ENCODE measurements at regions of chr2 and their contacts with region 1.

Region 1: DNA sequence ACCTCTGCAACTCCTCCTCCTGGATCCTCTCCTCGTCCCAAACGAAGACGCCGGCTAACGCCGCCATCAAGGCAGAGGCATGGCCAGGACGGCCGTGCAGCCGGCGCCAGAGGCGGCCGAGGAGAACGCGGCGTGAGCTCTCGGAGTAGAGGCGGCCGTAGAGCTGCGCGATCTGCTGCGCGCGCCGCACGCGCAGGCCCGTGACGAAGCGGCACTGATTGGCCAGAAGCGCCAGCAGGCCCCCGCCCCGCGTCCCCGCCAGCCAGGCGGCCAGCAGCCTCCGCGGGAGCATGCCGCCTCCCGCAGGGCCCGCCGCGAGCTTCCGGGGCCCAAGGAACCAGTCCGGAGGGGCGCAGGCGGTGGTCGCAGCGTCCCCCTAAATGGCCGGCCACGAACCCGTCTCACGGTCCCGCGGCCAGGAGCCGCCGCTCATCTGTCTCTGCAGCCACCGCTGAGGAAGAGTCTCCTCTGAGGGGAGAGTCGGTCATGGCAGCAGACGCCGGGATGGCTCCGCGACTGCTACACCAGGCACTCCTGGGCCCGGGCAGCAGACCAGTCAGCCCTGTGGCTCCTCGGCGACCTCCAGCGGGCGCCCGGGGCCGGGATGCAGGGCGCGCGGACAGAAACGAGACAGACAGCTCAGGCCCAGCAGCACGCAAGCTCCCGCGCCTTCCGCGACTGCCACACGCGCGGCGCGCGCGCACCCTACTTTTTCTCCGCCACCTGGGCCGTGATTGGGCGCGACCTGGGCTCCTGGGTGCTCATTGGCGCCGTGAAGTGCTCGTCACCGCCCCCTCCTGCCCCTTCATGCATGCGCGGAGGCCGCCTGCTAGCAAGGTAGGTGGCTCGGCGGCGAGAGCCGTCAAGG is at the start of gene STARD7:
- DNase-seq: peak; percentile 99 to 100 (median 100)
- ATAC-seq: peak; percentile 98
- H3K4me3 ChIP-seq: peak within 1 kb of the TSS; percentile 72
- H3K27ac ChIP-seq: peak within 1 kb of the TSS; percentile 91
- H3K4me1 ChIP-seq: peaks cover 12% of the 10 kb centered on the region
- H3K27me3 ChIP-seq: no peaks in the 10 kb centered on the region
- total RNA-seq, gene STARD7: 142 to 184 (median 156) TPM

Region 2: DNA sequence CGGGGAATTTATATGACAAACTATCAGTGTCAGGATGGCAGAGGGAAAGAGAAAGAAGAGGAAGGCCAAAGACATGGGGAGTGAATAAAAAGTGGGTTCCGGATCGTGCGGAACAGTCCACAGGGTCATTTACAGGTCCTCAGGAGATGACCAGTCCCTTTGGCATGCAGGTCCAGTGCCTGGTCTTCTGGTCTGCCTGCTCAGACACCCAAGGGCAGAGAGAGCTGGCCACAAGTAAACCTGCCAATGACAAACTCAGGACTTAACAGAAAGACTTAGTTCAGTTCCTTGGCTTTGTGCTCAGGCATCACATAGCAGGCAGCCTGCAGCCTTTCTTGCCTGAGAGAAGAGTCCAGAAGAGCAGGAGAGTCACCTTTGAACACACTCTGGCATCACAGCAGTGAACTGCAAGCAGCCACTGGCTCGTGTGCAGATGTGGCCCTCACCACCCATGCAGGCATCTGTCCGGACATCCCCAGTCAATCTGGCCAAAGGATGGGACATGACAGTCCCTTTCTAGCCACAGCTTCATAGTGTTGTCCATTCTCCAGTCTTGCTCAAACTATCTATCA is 43.4 kb after region 1 on chr2:
- intact Hi-C with region 1: loop called in 1 of 4 experiments (anchors 5 kb)
- DNase-seq: peak; percentile 82 to 89 (median 82)
- ATAC-seq: peak; percentile 72 to 77
- H3K4me3 ChIP-seq: no peak overlapping the region
- H3K27ac ChIP-seq: peak overlapping the region; percentile 78
- H3K4me1 ChIP-seq: peaks cover 18% of the 10 kb centered on the region
- H3K27me3 ChIP-seq: no peaks in the 10 kb centered on the region

Region 3: GRCh38 chr2:96260404-96261260 is 52.3 kb after region 1 on chr2:
- intact Hi-C with region 1: loop called in 2 of 4 experiments (anchors 5 kb)
- DNase-seq: peak; percentile 45 to 75 (median 72)
- ATAC-seq: peak; percentile 75 to 84
- H3K4me3 ChIP-seq: no peak overlapping the region
- H3K27ac ChIP-seq: peak overlapping the region; percentile 97
- H3K4me1 ChIP-seq: peaks cover 37% of the 10 kb centered on the region
- H3K27me3 ChIP-seq: no peaks in the 10 kb centered on the region

Measured in right cardiac atrium (tissue), 5 donors.